ENCODE measurements at regions of chrX and their contacts with region 1.

Region 1: DNA sequence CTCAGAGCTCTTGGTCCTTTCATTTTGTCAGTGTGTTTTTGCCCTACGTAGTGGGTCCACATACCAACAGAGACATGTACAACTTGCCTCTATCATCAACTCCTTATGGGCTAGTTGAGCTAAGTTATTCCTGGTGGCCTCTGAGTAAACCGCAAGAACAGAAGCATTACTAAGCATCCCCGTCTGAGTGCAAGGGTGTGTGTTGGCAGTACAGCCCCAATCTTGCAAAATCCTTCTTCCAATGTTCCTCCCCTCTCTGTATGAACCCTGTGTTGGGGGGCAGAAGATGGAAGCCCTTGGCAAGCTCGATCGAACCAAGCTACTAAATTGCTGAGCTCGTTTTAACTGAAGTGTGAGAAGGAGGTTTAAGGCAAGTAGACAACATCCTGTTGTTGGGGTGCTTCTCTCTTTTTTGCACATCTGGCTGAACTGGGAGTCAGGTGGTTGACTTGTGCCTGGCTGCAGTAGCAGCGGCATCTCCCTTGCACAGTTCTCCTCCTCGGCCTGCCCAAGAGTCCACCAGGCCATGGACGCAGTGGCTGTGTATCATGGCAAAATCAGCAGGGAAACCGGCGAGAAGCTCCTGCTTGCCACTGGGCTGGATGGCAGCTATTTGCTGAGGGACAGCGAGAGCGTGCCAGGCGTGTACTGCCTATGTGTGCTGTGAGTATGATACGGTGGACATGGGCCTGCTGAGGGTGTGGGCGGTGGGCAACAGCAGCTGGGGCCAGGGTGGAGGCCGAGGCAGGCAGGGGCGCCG is at the start of gene SH2D1A:
- DNase-seq: peak; percentile 39
- H3K4me3 Mint-ChIP-seq: peak within 1 kb of the TSS; percentile 87
- H3K27ac Mint-ChIP-seq: peak within 1 kb of the TSS; percentile 98
- H3K4me1 Mint-ChIP-seq: peaks cover 42% of the 10 kb centered on the region
- H3K27me3 Mint-ChIP-seq: no peaks in the 10 kb centered on the region
- total RNA-seq, gene SH2D1A: 30.5 to 32.3 TPM

Region 2: DNA sequence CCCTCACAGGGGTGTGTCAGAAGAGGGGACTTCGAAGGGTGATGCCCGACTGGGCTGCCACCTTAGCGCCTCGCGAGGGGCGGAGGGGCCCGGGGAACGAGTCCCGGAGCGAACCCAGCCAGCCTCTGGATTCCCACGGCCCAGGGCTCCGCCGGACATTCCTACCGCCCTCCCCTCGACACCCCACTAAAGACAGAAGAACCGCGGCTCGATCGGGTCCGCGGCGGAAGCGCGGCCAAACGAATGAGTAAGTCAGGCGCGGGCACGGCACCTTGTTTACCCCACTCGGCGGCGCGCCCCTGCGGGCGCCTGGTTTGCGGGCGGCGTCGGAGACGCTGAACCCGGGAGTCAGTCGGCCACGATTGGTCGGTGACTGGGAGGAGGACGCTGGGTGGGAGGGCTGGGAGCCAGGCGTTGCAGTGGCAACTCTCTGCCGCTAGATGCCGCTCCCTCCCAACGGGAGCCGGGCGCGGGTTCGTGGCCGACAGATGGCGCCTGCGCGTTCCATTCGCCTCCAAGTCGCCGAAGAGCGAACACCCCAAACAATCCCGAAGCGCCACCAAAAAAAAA is 386.2 kb before region 1 on chrX:
- CTCF ChIA-PET with region 1: no interaction called
- POLR2A ChIA-PET with region 1: interaction called, 11 read pairs
- intact Hi-C with region 1: loop called (anchors 2 kb)
- DNase-seq: peak; percentile 94
- H3K4me3 Mint-ChIP-seq: peak overlapping the region; percentile 92
- H3K27ac Mint-ChIP-seq: peak overlapping the region; percentile 99
- H3K4me1 Mint-ChIP-seq: peaks cover 17% of the 10 kb centered on the region
- H3K27me3 Mint-ChIP-seq: no peaks in the 10 kb centered on the region

Region 3: DNA sequence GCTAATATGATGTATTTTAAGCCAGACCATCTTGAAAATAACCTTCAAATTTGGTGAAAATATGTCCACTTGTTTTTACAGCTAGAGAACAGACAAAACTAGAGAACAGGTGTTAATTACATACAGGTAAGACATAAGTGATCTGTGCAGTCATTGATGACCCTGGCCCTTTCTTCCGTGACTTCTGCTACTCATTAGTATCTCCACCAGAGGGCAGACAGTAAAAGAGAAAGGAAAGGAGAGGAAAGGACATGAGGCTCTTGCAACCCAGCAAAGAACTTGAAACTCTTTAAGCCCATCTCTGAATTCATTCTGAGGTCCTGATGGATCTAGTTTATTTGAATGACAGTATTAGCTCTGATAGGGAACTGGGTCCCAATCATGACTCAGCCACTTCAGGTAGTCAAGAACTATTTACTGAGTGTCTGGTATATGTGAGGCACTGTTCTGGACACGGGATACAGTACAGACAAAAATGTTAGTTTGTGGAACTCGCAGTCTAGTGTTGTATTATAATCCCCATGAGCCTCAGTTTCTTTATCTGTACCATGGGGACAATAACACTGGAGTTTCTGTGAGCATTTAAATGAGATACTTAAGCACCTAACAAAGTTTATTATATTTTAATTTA is 134.9 kb before region 1 on chrX:
- CTCF ChIA-PET with region 1: interaction called, 3 read pairs
- POLR2A ChIA-PET with region 1: interaction called, 55 read pairs
- intact Hi-C with region 1: loop called (anchors 1 kb)
- DNase-seq: peak; percentile 15
- H3K4me3 Mint-ChIP-seq: no peak overlapping the region
- H3K27ac Mint-ChIP-seq: no peak overlapping the region
- H3K4me1 Mint-ChIP-seq: peaks cover 33% of the 10 kb centered on the region
- H3K27me3 Mint-ChIP-seq: no peaks in the 10 kb centered on the region

Region 4: DNA sequence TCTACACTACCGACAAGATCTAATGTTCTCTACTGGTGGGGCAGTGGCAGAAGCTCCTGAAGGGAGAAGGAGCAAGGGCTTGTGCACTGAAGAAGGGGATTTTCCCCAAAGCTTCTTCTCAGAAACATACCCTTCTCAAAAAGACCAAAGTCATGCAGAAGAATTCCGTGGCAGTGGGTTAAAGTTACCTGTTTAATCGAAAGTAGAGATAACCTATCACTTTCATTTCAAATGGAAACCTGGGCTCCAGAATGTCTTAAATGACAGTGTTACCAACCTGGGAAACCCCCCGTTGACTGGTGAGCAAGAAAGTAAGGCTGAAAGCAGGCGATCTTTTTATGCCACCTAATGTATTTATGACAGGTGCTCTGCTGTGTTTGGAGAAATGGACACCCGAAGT is 106.4 kb before region 1 on chrX:
- CTCF ChIA-PET with region 1: interaction called, 3 read pairs
- POLR2A ChIA-PET with region 1: interaction called, 12 read pairs
- intact Hi-C with region 1: loop called (anchors 1 kb)
- DNase-seq: peak; percentile 61
- H3K4me3 Mint-ChIP-seq: peak overlapping the region; percentile 46
- H3K27ac Mint-ChIP-seq: peak overlapping the region; percentile 70
- H3K4me1 Mint-ChIP-seq: peaks cover 44% of the 10 kb centered on the region
- H3K27me3 Mint-ChIP-seq: no peaks in the 10 kb centered on the region

Region 5: GRCh38 chrX:124300405-124300804 is 45.9 kb before region 1 on chrX:
- CTCF ChIA-PET with region 1: no interaction called
- POLR2A ChIA-PET with region 1: no interaction called
- intact Hi-C with region 1: loop called (anchors 1 kb)
- DNase-seq: no peak
- H3K4me3 Mint-ChIP-seq: no peak overlapping the region
- H3K27ac Mint-ChIP-seq: peak overlapping the region; percentile 58
- H3K4me1 Mint-ChIP-seq: peaks cover 32% of the 10 kb centered on the region
- H3K27me3 Mint-ChIP-seq: no peaks in the 10 kb centered on the region

Region 6: GRCh38 chrX:124358800-124359383 is 12.6 kb after region 1 on chrX:
- CTCF ChIA-PET with region 1: interaction called, 5 read pairs
- POLR2A ChIA-PET with region 1: interaction called, 10 read pairs
- intact Hi-C with region 1: loop called (anchors 1 kb)
- DNase-seq: no peak
- H3K4me3 Mint-ChIP-seq: peak overlapping the region; percentile 77
- H3K27ac Mint-ChIP-seq: peak overlapping the region; percentile 93
- H3K4me1 Mint-ChIP-seq: peaks cover 54% of the 10 kb centered on the region
- H3K27me3 Mint-ChIP-seq: no peaks in the 10 kb centered on the region

Region 7: GRCh38 chrX:124426288-124427169 is 80.2 kb after region 1 on chrX:
- CTCF ChIA-PET with region 1: no interaction called
- POLR2A ChIA-PET with region 1: no interaction called
- intact Hi-C with region 1: no loop called
- DNase-seq: no peak
- H3K4me3 Mint-ChIP-seq: no peak overlapping the region
- H3K27ac Mint-ChIP-seq: no peak overlapping the region
- H3K4me1 Mint-ChIP-seq: no peaks in the 10 kb centered on the region
- H3K27me3 Mint-ChIP-seq: no peaks in the 10 kb centered on the region

Measured in activated CD4-positive, alpha-beta memory T cell treated with anti-CD3 and anti-CD28 coated beads for 36 hours (primary cell).